BJ (cell line): ENCODE measurements at regions of chr20 and their contacts with region 1.

Region 1: GRCh38 chr20:4929686-4930397 is 71.5 kb downstream of the SLC23A2 start:
- DNase-seq: no peak
- H3K4me3 ChIP-seq: no peak overlapping the region
- H3K27me3 ChIP-seq: no peaks in the 10 kb centered on the region
- CTCF ChIP-seq: no peak

Region 2: DNA sequence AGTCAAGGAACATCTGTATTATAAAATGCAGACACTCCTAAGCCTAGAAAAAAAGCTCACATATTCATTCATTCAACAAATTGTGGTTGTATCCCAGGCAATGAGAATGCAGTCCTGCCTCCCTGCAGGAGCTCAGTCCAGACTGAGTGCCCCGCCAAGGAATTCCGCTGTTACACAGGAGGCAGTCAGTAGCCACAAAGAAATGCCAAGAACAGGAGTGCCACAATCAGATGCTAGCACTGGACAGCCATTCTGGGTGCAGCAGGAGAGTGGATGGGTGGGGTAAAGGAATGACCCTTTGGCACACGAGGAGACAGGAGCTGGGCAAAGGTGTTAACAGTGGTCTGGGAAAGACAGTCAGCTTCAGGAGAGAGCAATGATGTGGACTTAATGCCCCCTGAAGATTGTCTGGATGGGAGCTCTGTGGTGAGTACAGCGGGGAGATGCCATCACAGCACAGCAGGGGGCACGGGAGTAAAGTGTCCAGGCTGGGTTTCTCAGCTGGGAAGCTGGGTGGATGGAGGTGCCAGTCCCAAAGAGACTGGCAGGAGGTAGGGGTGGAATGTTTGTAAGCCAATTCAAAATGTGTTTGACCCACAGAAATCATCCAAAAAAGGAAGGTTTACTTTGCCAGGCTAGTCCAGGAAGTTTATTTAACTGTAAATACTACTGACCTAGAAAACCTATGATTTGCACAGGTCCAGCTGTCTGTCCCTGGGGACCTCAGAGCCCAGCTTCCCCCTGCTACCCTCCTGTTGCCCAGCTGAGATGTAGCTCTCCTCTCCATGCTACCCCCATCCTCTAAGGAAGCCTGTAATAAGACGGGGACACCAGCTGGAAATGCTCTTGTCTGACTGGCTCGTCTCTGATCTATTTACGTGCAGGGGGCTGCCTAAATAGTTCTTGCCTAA is 12.6 kb before region 1 on chr20:
- CTCF ChIA-PET with region 1: interaction called, 15 read pairs
- POLR2A ChIA-PET with region 1: no interaction called
- DNase-seq: no peak
- H3K4me3 ChIP-seq: no peak overlapping the region
- H3K27me3 ChIP-seq: no peaks in the 10 kb centered on the region
- CTCF ChIP-seq: no peak

Region 3: DNA sequence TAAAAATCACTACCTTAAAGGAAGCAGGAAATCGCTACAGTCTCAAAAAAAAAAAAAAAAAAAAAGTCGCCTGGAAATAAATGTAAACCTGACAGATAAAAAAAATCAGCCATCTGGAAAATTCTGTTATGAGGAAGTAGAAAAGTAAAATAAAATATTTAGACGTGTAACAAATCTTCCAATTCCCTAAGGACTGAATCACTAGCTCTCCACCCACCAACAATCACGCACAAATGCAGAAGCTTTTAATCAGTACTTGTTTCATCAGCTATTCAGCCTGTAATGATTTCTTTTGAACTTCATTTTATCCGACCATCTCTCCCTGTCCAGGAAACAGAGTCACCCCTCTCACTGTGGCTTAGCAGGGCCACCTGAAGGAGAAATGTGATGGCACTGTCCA is 12.5 kb after region 1 on chr20:
- CTCF ChIA-PET with region 1: no interaction called
- POLR2A ChIA-PET with region 1: no interaction called
- DNase-seq: peak; percentile 46
- H3K4me3 ChIP-seq: no peak overlapping the region
- H3K27me3 ChIP-seq: no peaks in the 10 kb centered on the region
- CTCF ChIP-seq: no peak

Region 4: GRCh38 chr20:4973330-4974097 is 43.7 kb after region 1 on chr20:
- CTCF ChIA-PET with region 1: no interaction called
- POLR2A ChIA-PET with region 1: no interaction called
- DNase-seq: peak; percentile 45
- H3K4me3 ChIP-seq: peak overlapping the region; percentile 21
- H3K27me3 ChIP-seq: no peaks in the 10 kb centered on the region
- CTCF ChIP-seq: no peak